A673 (cell line): ENCODE measurements at regions of chr1 and their contacts with region 1.

Region 1: GRCh38 chr1:214637722-214638458 is 34.9 kb downstream of the CENPF start:
- DNase-seq: peak; percentile 65
- H3K4me3 ChIP-seq: no peak overlapping the region
- H3K27ac ChIP-seq: no peak overlapping the region
- H3K4me1 ChIP-seq: no peaks in the 10 kb centered on the region
- H3K27me3 ChIP-seq: no peaks in the 10 kb centered on the region
- CTCF ChIP-seq: peak; percentile 74

Region 2: GRCh38 chr1:214213136-214213535 is 424.8 kb before region 1 on chr1:
- CTCF ChIA-PET with region 1: no interaction called
- POLR2A ChIA-PET with region 1: no interaction called
- intact Hi-C with region 1: loop called (anchors 2 kb)
- DNase-seq: no peak
- H3K4me3 ChIP-seq: no peak overlapping the region
- H3K27ac ChIP-seq: no peak overlapping the region
- H3K4me1 ChIP-seq: no peaks in the 10 kb centered on the region
- H3K27me3 ChIP-seq: peaks cover 13% of the 10 kb centered on the region
- CTCF ChIP-seq: no peak

Region 3: DNA sequence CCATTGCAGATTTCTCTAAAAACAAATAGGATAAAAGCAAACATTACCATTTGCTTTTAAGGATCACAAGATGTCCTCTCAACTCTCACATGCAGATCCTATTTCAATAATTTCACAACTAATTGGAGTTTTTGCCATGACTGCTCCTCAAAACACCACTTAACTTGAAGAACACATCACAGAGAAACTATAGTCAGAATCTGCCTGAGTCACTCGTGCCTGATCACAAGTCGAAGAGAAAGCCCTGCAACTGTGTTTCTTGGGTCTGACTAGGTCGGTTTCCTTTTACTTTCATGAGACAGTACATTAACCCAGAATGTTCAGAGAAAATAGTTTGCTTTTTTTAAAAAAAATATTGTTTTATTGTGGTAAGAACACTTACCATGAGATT is 403.3 kb before region 1 on chr1:
- CTCF ChIA-PET with region 1: no interaction called
- POLR2A ChIA-PET with region 1: no interaction called
- intact Hi-C with region 1: no loop called
- DNase-seq: no peak
- H3K4me3 ChIP-seq: no peak overlapping the region
- H3K27ac ChIP-seq: no peak overlapping the region
- H3K4me1 ChIP-seq: no peaks in the 10 kb centered on the region
- H3K27me3 ChIP-seq: peaks cover 30% of the 10 kb centered on the region
- CTCF ChIP-seq: no peak

Region 4: DNA sequence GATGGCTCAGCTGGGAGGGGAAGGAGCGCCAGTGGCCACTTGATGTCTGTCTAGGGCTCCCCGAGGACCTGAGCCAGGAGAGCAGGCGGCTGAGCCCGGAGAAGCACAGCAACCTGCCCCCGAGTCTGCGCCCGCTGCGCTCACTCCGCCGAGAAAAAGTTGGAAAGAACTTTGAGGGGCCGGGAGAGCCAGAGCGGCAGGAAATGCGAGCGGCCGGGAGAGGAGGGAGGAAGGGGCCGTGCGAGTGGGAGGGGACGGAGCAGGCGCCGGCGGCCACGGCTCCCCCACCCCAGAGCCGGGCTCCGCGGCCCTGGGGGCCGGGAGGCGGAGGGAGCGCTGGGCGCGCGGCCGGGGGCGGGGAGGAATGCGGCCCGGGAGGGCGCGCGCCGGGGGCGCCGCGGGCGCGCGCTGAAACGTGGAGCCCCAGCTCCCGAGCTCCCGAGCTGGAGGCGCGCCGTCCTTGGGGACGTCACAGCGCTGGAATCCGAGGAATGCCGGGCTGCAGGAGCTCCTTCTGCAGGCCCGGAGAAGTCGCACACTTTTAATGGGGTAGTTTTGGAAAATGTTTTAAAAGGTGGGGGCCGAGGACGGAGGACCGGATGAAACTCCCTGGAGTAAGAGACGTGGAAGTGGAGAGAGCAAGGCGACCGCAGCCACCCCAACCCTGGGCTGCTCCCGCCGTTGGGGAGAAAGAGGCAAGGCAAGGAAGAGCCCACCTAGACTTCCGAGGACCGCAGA is 86.3 kb before region 1 on chr1 and contains the start of gene PTPN14:
- CTCF ChIA-PET with region 1: no interaction called
- POLR2A ChIA-PET with region 1: no interaction called
- intact Hi-C with region 1: no loop called
- DNase-seq: peak; percentile 98
- H3K4me3 ChIP-seq: peak within 1 kb of the TSS; percentile 92
- H3K27ac ChIP-seq: peak within 1 kb of the TSS; percentile 93
- H3K4me1 ChIP-seq: peaks cover 30% of the 10 kb centered on the region
- H3K27me3 ChIP-seq: no peaks in the 10 kb centered on the region
- CTCF ChIP-seq: peak; percentile 35; the same call in 1 of the 2 replicates
- total RNA-seq, gene PTPN14: 103 and 114 TPM in 2 replicates

Region 5: DNA sequence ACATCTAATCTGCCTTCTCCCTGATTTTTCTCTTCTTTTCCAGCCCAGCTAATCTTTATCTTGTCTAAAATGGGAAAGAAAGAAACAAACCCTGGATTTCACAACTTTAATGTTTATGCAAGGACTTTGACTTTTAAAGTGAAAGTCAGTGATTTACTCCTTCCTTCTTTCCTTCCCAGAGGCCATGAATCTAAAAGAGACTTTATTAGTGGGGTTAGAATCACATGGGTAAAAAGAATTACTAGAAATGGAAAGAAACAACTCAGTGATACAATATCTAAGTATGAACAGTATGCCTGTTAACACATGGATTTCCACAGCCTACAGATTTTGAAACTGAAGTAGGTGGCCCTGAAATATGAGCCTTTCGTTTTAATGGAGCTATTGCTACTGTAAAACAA is 384.9 kb after region 1 on chr1:
- CTCF ChIA-PET with region 1: no interaction called
- POLR2A ChIA-PET with region 1: no interaction called
- intact Hi-C with region 1: no loop called
- DNase-seq: no peak
- H3K4me3 ChIP-seq: no peak overlapping the region
- H3K27ac ChIP-seq: no peak overlapping the region
- H3K4me1 ChIP-seq: no peaks in the 10 kb centered on the region
- H3K27me3 ChIP-seq: peaks cover 13% of the 10 kb centered on the region
- CTCF ChIP-seq: no peak